Vagina (tissue), 2 donors: ENCODE measurements at regions of chr6 and their contacts with region 1.

Region 1: GRCh38 chr6:52389626-52390360 is 27.8 kb downstream of the PAQR8 start:
- DNase-seq: no peak
- H3K4me3 ChIP-seq: peak overlapping the region in 1 of 2 donors; percentile 5
- H3K27ac ChIP-seq: peak overlapping the region; percentile 14
- H3K4me1 ChIP-seq: peaks cover 24% of the 10 kb centered on the region
- H3K27me3 ChIP-seq: no peaks in the 10 kb centered on the region
- CTCF ChIP-seq: no peak
- POLR2A ChIP-seq: no peak

Region 2: GRCh38 chr6:51996296-51996947 is 393.4 kb before region 1 on chr6:
- intact Hi-C with region 1: no loop called
- DNase-seq: no peak
- H3K4me3 ChIP-seq: no peak overlapping the region
- H3K27ac ChIP-seq: no peak overlapping the region
- H3K4me1 ChIP-seq: no peaks in the 10 kb centered on the region
- H3K27me3 ChIP-seq: no peaks in the 10 kb centered on the region
- CTCF ChIP-seq: no peak
- POLR2A ChIP-seq: no peak

Region 3: GRCh38 chr6:52284460-52285176 is 105.2 kb before region 1 on chr6 and contains the start of gene MCM3:
- intact Hi-C with region 1: loop called (anchors 10 kb)
- DNase-seq: peak; percentile 100
- H3K4me3 ChIP-seq: peak within 1 kb of the TSS; percentile 79 to 91
- H3K27ac ChIP-seq: peak within 1 kb of the TSS; percentile 62
- H3K4me1 ChIP-seq: peaks cover 23% of the 10 kb centered on the region
- H3K27me3 ChIP-seq: no peaks in the 10 kb centered on the region
- CTCF ChIP-seq: no peak
- POLR2A ChIP-seq: no peak
- total RNA-seq, gene MCM3: 36.3 TPM